ENCODE measurements at regions of chr6 and their contacts with region 1.

Region 1: GRCh38 chr6:13614926-13615798 is at the start of gene NOL7:
- DNase-seq: peak; percentile 95
- H3K4me3 ChIP-seq: peak within 1 kb of the TSS; percentile 66 to 85 (median 81)
- H3K27ac ChIP-seq: peak within 1 kb of the TSS; percentile 77
- H3K4me1 ChIP-seq: peaks cover 10% of the 10 kb centered on the region
- H3K27me3 ChIP-seq: no peaks in the 10 kb centered on the region
- CTCF ChIP-seq: peak; percentile 95
- total RNA-seq, gene NOL7: 20.3 to 70.0 TPM

Region 2: DNA sequence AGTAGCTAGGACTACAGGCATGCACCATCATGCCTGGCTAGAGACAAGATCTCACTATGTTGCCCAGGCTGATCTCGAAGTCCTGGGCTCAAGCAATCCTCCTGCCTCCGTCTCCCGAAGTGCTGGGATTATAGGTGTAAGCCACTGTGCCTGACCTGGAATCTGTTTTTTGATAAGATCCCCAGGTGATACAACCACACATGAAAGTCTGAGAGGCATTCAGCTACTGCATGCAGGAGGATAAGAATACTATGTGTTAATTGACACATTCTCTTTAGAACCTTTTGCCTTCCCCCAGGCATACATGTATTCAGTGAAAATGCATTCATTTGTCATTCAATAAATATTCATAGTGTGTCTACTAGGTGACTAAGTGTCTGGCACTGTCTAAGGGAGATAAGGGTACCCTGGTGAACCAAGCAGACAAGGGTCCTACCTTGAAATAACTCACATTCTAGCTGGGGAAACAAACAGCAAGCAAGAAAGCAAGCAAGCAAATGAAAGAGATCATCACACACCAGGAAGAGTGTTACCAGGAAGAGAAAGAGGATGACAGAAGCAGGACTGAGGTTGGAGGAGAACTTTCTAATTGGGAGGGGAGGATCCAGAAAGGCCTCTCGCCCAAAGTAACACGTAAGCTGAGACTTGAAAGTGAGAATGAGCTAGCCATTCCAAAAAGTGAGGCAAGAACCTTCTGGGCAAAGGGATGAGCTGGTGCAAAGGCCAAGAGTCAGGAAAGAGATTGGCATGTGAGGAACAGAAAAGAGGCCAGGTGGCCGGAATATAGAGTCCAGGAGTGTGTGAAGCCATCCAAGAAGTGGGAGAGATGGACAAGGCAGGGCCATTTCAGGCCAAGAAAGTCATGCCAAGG is 134.3 kb before region 1 on chr6:
- CTCF ChIA-PET with region 1: no interaction called
- dilution Hi-C with region 1: no loop called
- in situ Hi-C with region 1: no loop called
- intact Hi-C with region 1: loop called (anchors 5 kb)
- DNase-seq: peak; percentile 33
- H3K4me3 ChIP-seq: no peak overlapping the region
- H3K27ac ChIP-seq: peak overlapping the region; percentile 43
- H3K4me1 ChIP-seq: peaks cover 54% of the 10 kb centered on the region
- H3K27me3 ChIP-seq: no peaks in the 10 kb centered on the region
- CTCF ChIP-seq: no peak

Region 3: DNA sequence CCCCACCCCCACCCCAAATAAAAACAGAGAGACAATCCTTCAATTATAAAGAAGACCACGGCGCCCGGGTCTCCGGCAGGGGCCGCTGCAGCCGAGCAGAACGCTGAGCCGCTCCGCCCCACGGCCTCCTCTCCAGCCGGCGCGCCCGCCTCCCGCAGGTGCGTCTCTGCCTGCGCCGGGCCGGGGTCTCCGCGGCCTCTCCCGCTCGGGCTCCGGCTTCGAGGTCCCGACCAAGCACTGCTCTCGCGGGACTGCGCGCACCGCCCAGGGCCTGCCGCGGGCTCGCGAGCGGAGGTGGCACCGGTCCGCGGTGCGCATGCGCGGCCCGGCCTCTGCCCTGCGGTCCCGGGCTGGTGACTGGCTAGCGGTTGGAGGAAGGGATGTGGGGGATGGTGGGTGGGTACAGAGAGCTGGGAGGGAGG is 41.0 kb before region 1 on chr6:
- CTCF ChIA-PET with region 1: interaction called, 3 read pairs
- dilution Hi-C with region 1: no loop called
- in situ Hi-C with region 1: no loop called
- intact Hi-C with region 1: loop called (anchors 1 kb)
- DNase-seq: peak; percentile 92
- H3K4me3 ChIP-seq: peak overlapping the region; percentile 61 to 92 (median 77)
- H3K27ac ChIP-seq: peak overlapping the region; percentile 92
- H3K4me1 ChIP-seq: peaks cover 9% of the 10 kb centered on the region
- H3K27me3 ChIP-seq: no peaks in the 10 kb centered on the region
- CTCF ChIP-seq: peak; percentile 15 to 55

Measured in mammary epithelial cell (primary cell).